ENCODE measurements at regions of chr13 and their contacts with region 1.

Region 1: GRCh38 chr13:106858908-106859904 is 291.3 kb upstream of the ARGLU1 start:
- DNase-seq: peak; percentile 68 to 96
- H3K4me3 ChIP-seq: peak overlapping the region; percentile 50
- H3K27ac ChIP-seq: peak overlapping the region; percentile 92
- H3K4me1 ChIP-seq: peaks cover 58% of the 10 kb centered on the region
- H3K27me3 ChIP-seq: no peaks in the 10 kb centered on the region
- CTCF ChIP-seq: no peak

Region 2: GRCh38 chr13:105232439-105232838 is 1626.8 kb before region 1 on chr13:
- CTCF ChIA-PET with region 1: no interaction called
- POLR2A ChIA-PET with region 1: no interaction called
- intact Hi-C with region 1: no loop called
- DNase-seq: no peak
- H3K4me3 ChIP-seq: no peak overlapping the region
- H3K27ac ChIP-seq: no peak overlapping the region
- H3K4me1 ChIP-seq: no peaks in the 10 kb centered on the region
- H3K27me3 ChIP-seq: no peaks in the 10 kb centered on the region
- CTCF ChIP-seq: no peak

Region 3: DNA sequence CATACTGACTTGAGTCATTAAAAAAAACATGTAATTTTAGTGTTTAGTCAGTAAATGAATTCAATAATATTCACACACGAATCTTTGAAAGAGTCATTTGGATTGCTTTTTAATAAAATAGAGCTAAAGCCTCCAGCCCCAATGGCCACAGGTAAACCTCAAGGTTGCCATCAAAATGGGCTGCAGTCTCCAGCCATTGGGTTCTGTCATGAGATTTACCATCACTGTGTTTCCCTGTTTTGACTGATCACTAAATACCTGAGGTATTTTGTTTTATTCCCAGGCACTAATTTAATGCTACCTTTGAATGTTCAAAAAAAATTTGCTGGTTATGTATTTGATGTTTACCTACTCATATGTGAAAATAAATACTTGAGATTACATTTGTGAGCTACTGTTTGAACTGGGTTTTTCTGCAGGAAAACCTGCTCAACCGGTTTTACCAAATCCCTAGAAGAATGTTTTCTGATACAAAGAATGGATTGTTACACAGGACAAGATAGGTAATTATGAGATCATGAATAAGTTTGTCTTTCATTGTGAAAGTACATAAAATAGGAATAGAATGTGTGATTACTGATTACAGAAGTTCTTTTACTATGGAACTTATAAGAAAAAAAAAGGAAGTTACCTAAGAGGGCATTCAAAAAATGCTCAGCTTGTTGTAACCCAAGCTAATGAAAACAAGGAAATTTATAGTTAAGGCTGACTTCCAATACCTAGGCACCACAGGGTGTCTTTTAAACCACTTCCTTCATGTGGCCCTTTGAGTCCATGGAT is 715.1 kb before region 1 on chr13:
- CTCF ChIA-PET with region 1: no interaction called
- POLR2A ChIA-PET with region 1: interaction called, 10 read pairs
- intact Hi-C with region 1: no loop called
- DNase-seq: peak; percentile 44 to 99
- H3K4me3 ChIP-seq: no peak overlapping the region
- H3K27ac ChIP-seq: peak overlapping the region; percentile 85
- H3K4me1 ChIP-seq: peaks cover 28% of the 10 kb centered on the region
- H3K27me3 ChIP-seq: no peaks in the 10 kb centered on the region
- CTCF ChIP-seq: no peak

Region 4: GRCh38 chr13:106561551-106562170 is 297.5 kb before region 1 on chr13:
- CTCF ChIA-PET with region 1: no interaction called
- POLR2A ChIA-PET with region 1: no interaction called
- intact Hi-C with region 1: no loop called
- DNase-seq: no peak
- H3K4me3 ChIP-seq: no peak overlapping the region
- H3K27ac ChIP-seq: no peak overlapping the region
- H3K4me1 ChIP-seq: peaks cover 27% of the 10 kb centered on the region
- H3K27me3 ChIP-seq: no peaks in the 10 kb centered on the region
- CTCF ChIP-seq: no peak

Region 5: GRCh38 chr13:106899439-106899838 is 40.2 kb after region 1 on chr13:
- CTCF ChIA-PET with region 1: no interaction called
- POLR2A ChIA-PET with region 1: no interaction called
- intact Hi-C with region 1: loop called (anchors 1 kb)
- DNase-seq: peak; percentile 23 to 86
- H3K4me3 ChIP-seq: no peak overlapping the region
- H3K27ac ChIP-seq: no peak overlapping the region
- H3K4me1 ChIP-seq: peaks cover 17% of the 10 kb centered on the region
- H3K27me3 ChIP-seq: no peaks in the 10 kb centered on the region
- CTCF ChIP-seq: no peak

Region 6: DNA sequence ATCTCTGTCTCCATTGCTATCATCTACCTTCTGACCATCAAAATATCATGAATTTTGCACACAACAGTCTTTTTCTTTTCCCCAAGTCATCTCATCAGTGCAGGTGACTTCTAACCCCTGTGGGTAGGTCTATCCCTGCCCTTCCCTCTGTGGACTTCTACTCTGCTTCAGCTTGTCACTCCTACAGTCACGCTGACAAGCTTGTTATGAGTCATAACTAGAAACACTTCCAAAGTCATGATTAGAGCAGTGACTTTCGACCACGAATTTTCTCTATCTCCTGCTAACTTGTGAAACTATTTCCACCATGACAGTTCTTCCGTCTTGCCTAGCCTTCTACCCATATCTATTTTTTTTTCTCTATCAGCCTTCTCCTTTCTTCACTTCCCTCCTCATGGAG is 52.4 kb after region 1 on chr13:
- CTCF ChIA-PET with region 1: interaction called, 3 read pairs
- POLR2A ChIA-PET with region 1: no interaction called
- intact Hi-C with region 1: loop called (anchors 2 kb)
- DNase-seq: peak in 1 of 2 experiments; percentile 59
- H3K4me3 ChIP-seq: no peak overlapping the region
- H3K27ac ChIP-seq: no peak overlapping the region
- H3K4me1 ChIP-seq: peaks cover 13% of the 10 kb centered on the region
- H3K27me3 ChIP-seq: no peaks in the 10 kb centered on the region
- CTCF ChIP-seq: no peak

Measured in PC-9 (cell line).